Adrenal gland (tissue), 19 donors: ENCODE measurements at regions of chr1 and their contacts with region 1.

Region 1: DNA sequence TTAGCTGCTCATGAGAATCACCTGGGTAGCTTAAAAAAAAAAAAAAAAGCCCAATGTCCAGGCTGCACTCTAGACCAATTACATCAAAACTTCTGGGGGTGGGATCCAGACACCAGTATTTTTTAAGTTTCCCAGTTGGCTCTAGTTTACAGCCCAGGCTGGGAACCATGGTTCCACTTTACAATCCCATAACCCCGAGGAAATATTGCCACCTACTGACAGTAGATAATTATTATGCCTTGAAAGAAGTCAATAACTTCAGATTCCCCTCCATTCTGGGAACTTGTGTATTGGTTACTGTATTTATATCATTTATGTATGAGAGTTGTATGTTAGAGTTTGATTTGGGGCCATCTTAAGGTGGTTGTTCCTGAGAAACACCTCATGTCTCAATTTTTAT is 100.2 kb downstream of the SPATA46 start:
- DNase-seq: no peak
- H3K4me3 ChIP-seq: no peak overlapping the region
- H3K27ac ChIP-seq: no peak overlapping the region
- H3K4me1 ChIP-seq: no peaks in the 10 kb centered on the region
- H3K27me3 ChIP-seq: no peaks in the 10 kb centered on the region
- CTCF ChIP-seq: peak; percentile 15 to 53 (median 47)
- POLR2A ChIP-seq: no peak

Region 2: DNA sequence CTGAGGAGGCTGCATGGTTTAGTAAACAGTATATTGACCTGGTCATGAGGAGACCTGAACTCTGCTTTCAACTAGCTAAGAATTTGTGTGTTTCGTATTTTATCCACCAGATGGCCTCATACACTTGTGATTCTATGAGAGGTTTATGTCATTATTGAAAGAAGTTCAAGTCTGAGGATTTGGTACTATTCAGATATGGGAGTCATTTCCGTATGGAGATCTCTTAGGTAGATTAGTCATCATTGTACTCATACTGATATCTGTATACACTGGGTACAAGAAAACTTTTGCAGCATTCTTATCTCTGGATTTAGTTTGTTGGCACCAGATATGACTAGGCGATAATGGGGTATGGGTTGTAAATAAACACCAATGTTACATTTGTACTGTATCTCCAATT is 483.8 kb before region 1 on chr1:
- intact Hi-C with region 1: loop called in 1 of 2 experiments (anchors 5 kb)
- DNase-seq: no peak
- H3K4me3 ChIP-seq: no peak overlapping the region
- H3K27ac ChIP-seq: peak overlapping the region in 1 of 5 donors; percentile 13
- H3K4me1 ChIP-seq: peaks cover 0 to 4% of the 10 kb centered on the region in 2 donors
- H3K27me3 ChIP-seq: no peaks in the 10 kb centered on the region
- CTCF ChIP-seq: peak; percentile 41 to 85 (median 74)
- POLR2A ChIP-seq: no peak

Region 3: DNA sequence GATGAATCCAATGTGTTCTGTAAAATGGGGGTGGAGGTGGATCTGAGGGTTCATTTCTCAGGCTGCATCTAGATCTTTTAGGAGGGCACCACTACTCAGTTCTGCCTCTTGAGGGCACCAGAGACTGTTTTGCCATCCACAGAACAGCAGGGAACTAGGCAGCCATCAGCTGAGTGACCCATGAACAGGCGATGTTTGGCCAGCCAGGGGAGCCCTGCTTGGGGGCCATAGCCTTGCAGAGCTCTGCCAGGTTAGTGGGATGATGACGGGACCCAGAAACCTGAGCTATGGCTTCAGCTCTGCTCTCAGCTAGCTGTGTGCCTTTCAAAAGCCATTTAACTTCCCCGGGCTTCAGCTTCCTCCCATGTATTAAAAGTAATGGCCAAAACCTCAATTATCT is 220.4 kb before region 1 on chr1:
- intact Hi-C with region 1: loop called (anchors 5 kb)
- DNase-seq: peak; percentile 59 to 89 (median 71)
- H3K4me3 ChIP-seq: no peak overlapping the region
- H3K27ac ChIP-seq: no peak overlapping the region
- H3K4me1 ChIP-seq: no peaks in the 10 kb centered on the region
- H3K27me3 ChIP-seq: no peaks in the 10 kb centered on the region
- CTCF ChIP-seq: peak; percentile 88 to 96 (median 92)
- POLR2A ChIP-seq: no peak

Region 4: DNA sequence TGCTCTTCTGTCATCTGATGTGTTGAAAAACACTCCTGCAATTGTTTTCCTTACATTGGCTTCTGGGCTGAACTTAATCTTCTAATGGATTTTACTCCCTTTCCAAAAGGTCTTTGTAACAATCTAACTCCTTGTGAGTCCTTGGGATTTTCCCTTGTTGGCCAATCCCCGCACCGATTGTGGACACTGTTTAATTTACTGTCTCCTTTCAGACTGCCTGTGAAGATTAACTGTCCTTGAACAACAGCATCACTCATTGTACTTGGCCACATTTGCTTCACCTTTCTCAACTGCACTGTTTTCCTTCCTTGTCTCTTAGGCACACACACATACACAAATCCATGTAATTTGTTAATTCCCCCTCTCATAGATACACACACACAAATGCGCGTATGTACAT is 20.2 kb before region 1 on chr1:
- intact Hi-C with region 1: no loop called
- DNase-seq: peak in 4 of 7 donors; percentile 9 to 36 (median 24)
- H3K4me3 ChIP-seq: no peak overlapping the region
- H3K27ac ChIP-seq: no peak overlapping the region
- H3K4me1 ChIP-seq: peaks cover 0 to 4% of the 10 kb centered on the region in 2 donors
- H3K27me3 ChIP-seq: no peaks in the 10 kb centered on the region
- CTCF ChIP-seq: no peak
- POLR2A ChIP-seq: no peak

Region 5: GRCh38 chr1:162389021-162389818 is 112.7 kb after region 1 on chr1:
- intact Hi-C with region 1: no loop called
- DNase-seq: peak in 1 of 7 donors; percentile 37
- H3K4me3 ChIP-seq: no peak overlapping the region
- H3K27ac ChIP-seq: peak overlapping the region in 2 of 5 donors; percentile 21 to 56
- H3K4me1 ChIP-seq: no peaks in the 10 kb centered on the region
- H3K27me3 ChIP-seq: peaks cover 11% of the 10 kb centered on the region
- CTCF ChIP-seq: no peak
- POLR2A ChIP-seq: no peak

Region 6: DNA sequence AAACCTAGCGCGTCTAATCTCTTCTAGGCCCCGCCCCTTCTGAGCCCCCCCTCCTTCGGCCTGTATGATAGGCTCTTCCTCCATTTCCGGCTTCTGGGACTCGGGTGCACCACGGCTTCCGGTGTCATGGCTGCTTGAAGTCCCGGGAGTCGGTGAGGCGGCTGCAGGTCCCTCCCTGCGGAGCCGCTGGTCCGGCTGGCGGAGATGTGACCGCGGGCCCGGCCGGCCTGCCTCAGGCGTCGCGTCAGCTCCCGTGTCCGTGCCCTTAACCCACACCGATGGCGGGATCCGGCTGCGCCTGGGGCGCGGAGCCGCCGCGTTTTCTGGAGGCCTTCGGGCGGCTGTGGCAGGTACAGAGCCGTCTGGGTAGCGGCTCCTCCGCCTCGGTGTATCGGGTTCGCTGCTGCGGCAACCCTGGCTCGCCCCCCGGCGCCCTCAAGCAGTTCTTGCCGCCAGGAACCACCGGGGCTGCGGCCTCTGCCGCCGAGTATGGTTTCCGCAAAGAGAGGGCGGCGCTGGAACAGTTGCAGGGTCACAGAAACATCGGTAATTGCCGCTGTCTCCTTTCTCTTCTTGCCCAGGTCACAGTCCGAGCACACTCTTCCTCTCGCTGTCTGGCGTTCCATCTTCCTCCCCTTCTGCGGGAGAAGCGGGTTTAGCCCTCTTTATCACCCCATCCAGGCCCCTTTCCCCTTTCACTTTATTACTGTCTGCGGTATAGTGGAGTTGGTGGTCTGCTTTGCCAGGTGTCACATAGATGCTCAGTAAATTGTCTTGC is 221.4 kb after region 1 on chr1 and contains the start of gene UHMK1:
- intact Hi-C with region 1: loop called in 1 of 2 experiments (anchors 10 kb)
- DNase-seq: peak; percentile 90 to 97 (median 94)
- H3K4me3 ChIP-seq: peak within 1 kb of the TSS; percentile 61 to 94 (median 71)
- H3K27ac ChIP-seq: peak within 1 kb of the TSS; percentile 88 to 96 (median 90)
- H3K4me1 ChIP-seq: peaks cover 10 to 31% of the 10 kb centered on the region in 2 donors
- H3K27me3 ChIP-seq: no peaks in the 10 kb centered on the region
- CTCF ChIP-seq: no peak
- POLR2A ChIP-seq: peak; percentile 40 to 74
- total RNA-seq, gene UHMK1: 46.0 to 81.6 (median 58.8) TPM